H1 (cell line): ENCODE measurements at regions of chr14 and their contacts with region 1.

Region 1: GRCh38 chr14:67704484-67705089 is 2.9 kb downstream of the RDH12 start:
- DNase-seq: no peak
- H3K4me3 ChIP-seq: no peak overlapping the region
- H3K27ac ChIP-seq: no peak overlapping the region
- H3K4me1 ChIP-seq: no peaks in the 10 kb centered on the region
- H3K27me3 ChIP-seq: no peaks in the 10 kb centered on the region
- CTCF ChIP-seq: peak in 2 of 3 experiments; percentile 66 to 73; a peak in 3 of 4 replicates
- EP300 ChIP-seq: no peak
- POLR2A ChIP-seq: no peak
- RAD21 ChIP-seq: peak; percentile 88 to 89

Region 2: GRCh38 chr14:67435615-67436346 is 268.8 kb before region 1 on chr14:
- CTCF ChIA-PET with region 1: no interaction called
- POLR2A ChIA-PET with region 1: no interaction called
- DNase-seq: no peak
- H3K4me3 ChIP-seq: no peak overlapping the region
- H3K27ac ChIP-seq: no peak overlapping the region
- H3K4me1 ChIP-seq: no peaks in the 10 kb centered on the region
- H3K27me3 ChIP-seq: no peaks in the 10 kb centered on the region
- CTCF ChIP-seq: no peak
- EP300 ChIP-seq: no peak
- POLR2A ChIP-seq: no peak
- RAD21 ChIP-seq: peak in 1 of 2 experiments; percentile 9; a peak in 1 of 4 replicates

Region 3: GRCh38 chr14:67599698-67600561 is 104.7 kb before region 1 on chr14 and contains the start of gene PIGH:
- CTCF ChIA-PET with region 1: interaction called, 16 read pairs
- POLR2A ChIA-PET with region 1: no interaction called
- DNase-seq: peak; percentile 46 to 95
- H3K4me3 ChIP-seq: peak within 1 kb of the TSS; percentile 60 to 79 (median 70)
- H3K27ac ChIP-seq: no peak within 1 kb of the TSS
- H3K4me1 ChIP-seq: no peaks in the 10 kb centered on the region; a peak in 1 of 7 replicates
- H3K27me3 ChIP-seq: peaks cover 4 to 41% (median 22%) of the 10 kb centered on the region in 4 experiments
- CTCF ChIP-seq: peak; percentile 53 to 97 (median 66)
- EP300 ChIP-seq: no peak
- POLR2A ChIP-seq: peak in 1 of 2 experiments; percentile 59; a peak in 2 of 3 replicates
- RAD21 ChIP-seq: peak; percentile 37 to 51; a peak in 3 of 4 replicates
- total RNA-seq, gene PIGH: 6.2 and 7.2 TPM in 2 replicates

Region 4: DNA sequence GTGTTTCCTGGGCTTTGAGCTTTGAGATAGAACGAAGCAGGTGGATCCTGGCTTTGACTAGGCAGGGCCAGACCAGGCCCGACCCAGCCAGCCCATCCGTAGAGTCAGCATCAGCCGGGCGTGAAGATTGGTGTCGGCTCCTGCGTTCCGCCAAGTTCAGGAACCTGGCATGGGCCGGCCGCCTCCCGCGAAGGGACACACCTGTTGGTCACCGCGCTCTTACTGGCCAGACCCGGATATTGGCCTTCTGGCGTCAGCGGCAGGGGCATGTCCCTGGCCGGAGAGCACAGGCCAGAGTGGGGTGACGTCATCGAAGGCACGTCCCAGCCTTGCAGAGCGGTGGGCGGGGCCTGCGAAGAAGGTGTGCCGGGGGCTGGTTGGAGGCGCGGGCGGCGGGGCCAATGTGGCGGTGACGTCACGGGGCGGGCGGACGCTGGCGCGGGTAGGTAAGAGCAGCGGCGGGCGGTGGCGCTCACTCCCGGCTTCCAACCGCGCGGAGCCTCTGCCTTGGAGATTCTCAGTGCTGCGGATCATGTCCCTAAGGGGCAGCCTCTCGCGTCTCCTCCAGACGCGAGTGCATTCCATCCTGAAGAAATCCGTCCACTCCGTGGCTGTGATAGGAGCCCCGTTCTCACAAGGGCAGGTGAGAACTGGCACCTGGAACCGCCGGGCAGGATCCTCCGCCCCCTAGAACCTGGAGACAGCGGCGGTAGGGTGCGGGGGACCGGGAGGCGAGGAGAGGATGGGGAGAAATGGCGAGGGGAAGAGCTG is 85.0 kb before region 1 on chr14 and contains the start of gene ARG2:
- CTCF ChIA-PET with region 1: interaction called, 20 read pairs
- POLR2A ChIA-PET with region 1: interaction called, 3 read pairs
- DNase-seq: peak; percentile 91 to 99
- H3K4me3 ChIP-seq: peak within 1 kb of the TSS; percentile 83 to 87 (median 84)
- H3K27ac ChIP-seq: peak within 1 kb of the TSS; percentile 58; the same call in 1 of the 2 replicates
- H3K4me1 ChIP-seq: peaks cover 0 to 6% (median 5%) of the 10 kb centered on the region in 4 experiments; a peak in 5 of 7 replicates
- H3K27me3 ChIP-seq: peaks cover 0 to 6% (median 2%) of the 10 kb centered on the region in 4 experiments; a peak in 4 of 7 replicates
- CTCF ChIP-seq: peak in 2 of 3 experiments; percentile 5 to 17; a peak in 2 of 4 replicates
- EP300 ChIP-seq: peak in 1 of 2 experiments; percentile 9; a peak in 1 of 3 replicates
- POLR2A ChIP-seq: peak; percentile 77 to 81; a peak in 2 of 3 replicates
- RAD21 ChIP-seq: no peak
- total RNA-seq, gene ARG2: 49.0 and 49.9 TPM in 2 replicates

Region 5: DNA sequence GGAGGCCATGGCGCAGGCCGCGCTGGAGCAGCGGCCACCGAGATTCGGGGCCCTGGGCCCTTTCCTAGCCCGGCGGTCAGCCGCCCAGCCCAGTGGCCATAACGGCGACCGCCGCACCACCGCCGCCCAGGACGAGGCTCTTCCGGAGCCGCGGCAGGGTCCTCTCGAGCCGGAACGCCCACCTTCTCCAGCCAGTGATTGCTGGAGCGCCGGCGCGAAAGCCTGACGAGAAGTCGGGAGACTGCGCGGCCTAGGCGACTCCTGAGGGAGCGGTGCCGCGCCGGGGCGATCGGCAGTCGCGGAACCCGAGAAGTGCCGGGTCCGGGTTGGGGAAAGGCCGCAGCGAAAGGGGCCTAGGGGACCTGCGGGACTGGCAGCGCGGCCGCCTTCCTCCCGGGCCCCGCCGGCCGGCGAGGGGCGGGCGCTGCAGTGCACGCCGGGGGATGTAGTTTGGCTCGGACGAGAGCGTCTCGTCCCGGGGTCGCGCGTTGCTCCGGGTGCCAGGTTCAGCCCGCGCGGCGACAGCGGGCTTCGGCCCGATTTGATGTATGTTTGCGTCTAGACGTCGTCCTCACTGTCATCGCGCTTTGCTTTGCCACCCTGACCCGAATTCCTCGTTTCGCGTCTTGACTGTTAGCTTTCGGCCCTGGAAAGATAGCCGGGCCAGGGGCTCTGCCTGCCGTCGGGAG is 30.0 kb before region 1 on chr14 and contains the start of gene VTI1B:
- CTCF ChIA-PET with region 1: interaction called, 13 read pairs
- POLR2A ChIA-PET with region 1: no interaction called
- DNase-seq: peak in 1 of 2 experiments; percentile 89
- H3K4me3 ChIP-seq: peak within 1 kb of the TSS; percentile 77 to 96 (median 80)
- H3K27ac ChIP-seq: peak within 1 kb of the TSS; percentile 99
- H3K4me1 ChIP-seq: no peaks in the 10 kb centered on the region; a peak in 2 of 7 replicates
- H3K27me3 ChIP-seq: no peaks in the 10 kb centered on the region
- CTCF ChIP-seq: peak in 1 of 3 experiments; percentile 9; a peak in 1 of 4 replicates
- EP300 ChIP-seq: no peak
- POLR2A ChIP-seq: peak; percentile 63 to 83
- RAD21 ChIP-seq: no peak
- total RNA-seq, gene VTI1B: 98.7 and 104 TPM in 2 replicates

Region 6: DNA sequence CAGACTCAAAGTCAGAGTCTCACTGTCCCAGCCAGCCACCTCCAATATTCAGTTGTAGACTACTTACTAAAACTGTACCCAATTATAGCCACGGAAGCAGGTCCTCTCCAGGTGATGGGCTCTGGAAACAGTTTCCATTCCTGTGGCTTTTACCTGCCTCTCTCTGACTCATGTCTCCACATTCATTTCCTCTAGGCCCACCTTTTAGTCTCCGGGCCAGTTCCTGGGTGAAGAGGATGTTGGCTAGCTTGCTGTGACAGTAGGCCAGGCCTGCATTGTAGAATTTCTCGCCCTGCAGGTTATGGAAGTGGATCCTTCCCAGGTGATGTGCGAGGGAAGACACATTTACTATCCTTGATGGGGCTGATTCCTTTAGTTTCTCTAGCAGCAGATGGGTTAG is 14.6 kb before region 1 on chr14:
- CTCF ChIA-PET with region 1: interaction called, 26 read pairs
- POLR2A ChIA-PET with region 1: interaction called, 13 read pairs
- DNase-seq: no peak
- H3K4me3 ChIP-seq: no peak overlapping the region
- H3K27ac ChIP-seq: no peak overlapping the region
- H3K4me1 ChIP-seq: peaks cover 3 to 5% (median 4%) of the 10 kb centered on the region in 4 experiments; a peak in 4 of 7 replicates
- H3K27me3 ChIP-seq: no peaks in the 10 kb centered on the region
- CTCF ChIP-seq: no peak
- EP300 ChIP-seq: no peak
- POLR2A ChIP-seq: no peak
- RAD21 ChIP-seq: no peak

Region 7: DNA sequence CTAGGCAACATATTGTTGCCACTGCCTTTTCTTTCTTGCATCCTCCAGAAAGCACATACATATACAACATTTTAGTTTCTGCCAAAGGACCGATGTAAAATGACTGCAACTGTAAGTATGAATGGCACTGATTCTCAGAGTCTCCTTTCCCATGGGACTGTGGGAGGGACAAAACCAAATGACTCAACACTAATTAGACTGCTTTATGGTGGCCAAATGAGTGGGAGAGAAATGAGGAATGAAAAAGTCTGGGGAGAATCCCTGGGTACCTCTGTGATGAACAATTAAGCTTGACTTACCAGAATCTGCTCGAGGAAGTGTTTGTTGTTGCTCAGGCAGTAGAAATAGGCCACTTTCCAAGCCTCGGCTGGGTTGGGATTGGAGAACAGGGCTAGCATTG is 101.7 kb after region 1 on chr14:
- CTCF ChIA-PET with region 1: no interaction called
- POLR2A ChIA-PET with region 1: no interaction called
- DNase-seq: no peak
- H3K4me3 ChIP-seq: no peak overlapping the region
- H3K27ac ChIP-seq: no peak overlapping the region
- H3K4me1 ChIP-seq: no peaks in the 10 kb centered on the region
- H3K27me3 ChIP-seq: no peaks in the 10 kb centered on the region
- CTCF ChIP-seq: no peak
- EP300 ChIP-seq: no peak
- POLR2A ChIP-seq: no peak
- RAD21 ChIP-seq: no peak